ENCODE measurements at regions of chrX and their contacts with region 1.

Region 1: GRCh38 chrX:65581661-65582339 is 47.2 kb upstream of the LAS1L start:
- DNase-seq: peak; percentile 70
- ATAC-seq: peak; percentile 64
- H3K4me3 Mint-ChIP-seq: no peak overlapping the region
- H3K27ac Mint-ChIP-seq: no peak overlapping the region
- H3K4me1 Mint-ChIP-seq: peaks cover 8% of the 10 kb centered on the region
- H3K27me3 Mint-ChIP-seq: no peaks in the 10 kb centered on the region

Region 2: GRCh38 chrX:66030505-66031317 is 448.9 kb after region 1 on chrX:
- CTCF ChIA-PET with region 1: no interaction called
- POLR2A ChIA-PET with region 1: no interaction called
- intact Hi-C with region 1: loop called in 1 of 2 experiments (anchors 5 kb)
- DNase-seq: peak; percentile 42
- ATAC-seq: peak; percentile 77
- H3K4me3 Mint-ChIP-seq: no peak overlapping the region
- H3K27ac Mint-ChIP-seq: no peak overlapping the region
- H3K4me1 Mint-ChIP-seq: no peaks in the 10 kb centered on the region
- H3K27me3 Mint-ChIP-seq: no peaks in the 10 kb centered on the region

Region 3: DNA sequence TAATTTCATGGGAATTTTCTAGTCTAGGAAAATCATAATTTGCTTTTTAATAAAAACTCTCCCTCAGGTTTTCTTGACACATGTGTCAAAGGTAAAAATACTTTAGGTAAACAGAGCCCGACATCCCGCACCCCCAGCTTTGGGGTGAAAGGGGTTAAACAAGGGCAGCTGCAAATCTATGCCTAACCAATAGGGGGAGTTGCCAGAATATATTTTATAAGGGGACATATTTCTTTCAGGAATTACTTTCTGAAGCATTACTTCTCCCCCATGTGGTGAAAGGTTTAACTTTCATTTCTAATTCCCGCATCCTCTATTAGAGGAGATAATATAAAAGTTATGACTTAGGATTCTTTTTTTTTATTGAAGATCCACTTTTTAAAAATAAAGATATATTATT is 528.3 kb after region 1 on chrX:
- CTCF ChIA-PET with region 1: interaction called, 4 read pairs
- POLR2A ChIA-PET with region 1: no interaction called
- intact Hi-C with region 1: loop called (anchors 1 kb)
- DNase-seq: peak; percentile 16
- ATAC-seq: no peak
- H3K4me3 Mint-ChIP-seq: no peak overlapping the region
- H3K27ac Mint-ChIP-seq: no peak overlapping the region
- H3K4me1 Mint-ChIP-seq: no peaks in the 10 kb centered on the region
- H3K27me3 Mint-ChIP-seq: no peaks in the 10 kb centered on the region

Region 4: DNA sequence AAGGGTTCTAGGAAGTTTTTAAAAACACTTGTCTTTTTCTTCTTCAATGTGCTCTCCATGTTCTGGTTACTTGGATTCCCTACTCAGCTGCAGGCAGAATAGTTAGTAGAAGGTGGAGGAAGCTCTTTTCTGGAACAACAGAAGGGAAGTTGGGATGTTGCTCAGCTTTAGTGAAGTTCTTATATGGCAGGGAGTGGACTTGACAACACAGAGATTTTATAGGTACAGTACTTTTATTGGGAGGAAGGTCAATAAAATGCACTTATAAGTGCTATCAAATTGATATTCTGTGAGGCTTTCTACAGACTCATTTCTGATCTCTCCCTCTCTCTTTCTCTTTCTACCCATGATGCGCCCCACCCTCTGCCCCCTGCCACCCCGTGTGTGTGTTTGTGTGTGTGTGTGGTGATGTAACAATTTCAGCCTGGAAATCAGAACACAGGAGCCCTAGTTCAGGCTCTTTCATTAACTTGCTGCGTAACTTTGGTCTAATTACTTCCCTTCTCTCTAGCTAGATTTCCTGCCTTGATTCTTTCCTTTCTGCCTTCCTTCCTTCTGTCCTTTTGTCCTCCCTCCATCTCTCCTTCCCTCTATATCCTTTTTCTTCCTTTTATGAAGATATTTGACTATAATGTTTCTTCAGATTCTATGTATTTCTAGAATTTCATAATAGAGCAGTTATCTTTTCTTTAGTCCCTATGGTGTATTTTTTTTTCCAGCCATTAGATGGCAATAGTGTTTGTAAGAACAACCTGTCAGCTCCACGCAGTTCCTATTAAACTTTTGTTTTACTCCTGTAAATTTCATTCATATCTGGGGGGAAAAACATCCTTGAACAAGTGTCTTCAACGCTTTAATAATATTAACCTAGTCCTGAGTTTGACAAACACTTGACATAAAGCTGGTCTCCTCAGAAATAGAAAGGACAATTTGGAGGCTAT is 619.3 kb after region 1 on chrX:
- CTCF ChIA-PET with region 1: no interaction called
- POLR2A ChIA-PET with region 1: no interaction called
- intact Hi-C with region 1: loop called in 1 of 2 experiments (anchors 10 kb)
- DNase-seq: no peak
- ATAC-seq: no peak
- H3K4me3 Mint-ChIP-seq: no peak overlapping the region
- H3K27ac Mint-ChIP-seq: peak overlapping the region; percentile 63
- H3K4me1 Mint-ChIP-seq: peaks cover 20% of the 10 kb centered on the region
- H3K27me3 Mint-ChIP-seq: no peaks in the 10 kb centered on the region

Region 5: GRCh38 chrX:66408507-66408906 is 826.7 kb after region 1 on chrX:
- CTCF ChIA-PET with region 1: no interaction called
- POLR2A ChIA-PET with region 1: no interaction called
- intact Hi-C with region 1: loop called (anchors 5 to 10 kb)
- DNase-seq: no peak
- ATAC-seq: peak; percentile 26
- H3K4me3 Mint-ChIP-seq: no peak overlapping the region
- H3K27ac Mint-ChIP-seq: no peak overlapping the region
- H3K4me1 Mint-ChIP-seq: no peaks in the 10 kb centered on the region
- H3K27me3 Mint-ChIP-seq: no peaks in the 10 kb centered on the region

Region 6: GRCh38 chrX:66728818-66729271 is 1147.0 kb after region 1 on chrX:
- CTCF ChIA-PET with region 1: interaction called, 3 read pairs
- POLR2A ChIA-PET with region 1: no interaction called
- intact Hi-C with region 1: loop called (anchors 1 to 5 kb)
- DNase-seq: peak; percentile 70
- ATAC-seq: peak; percentile 91
- H3K4me3 Mint-ChIP-seq: peak overlapping the region; percentile 77
- H3K27ac Mint-ChIP-seq: peak overlapping the region; percentile 92
- H3K4me1 Mint-ChIP-seq: no peaks in the 10 kb centered on the region
- H3K27me3 Mint-ChIP-seq: no peaks in the 10 kb centered on the region